GM12878 (cell line): ENCODE measurements at regions of chr2 and their contacts with region 1.

Region 1: GRCh38 chr2:231111987-231112386 is 12.9 kb downstream of the HTR2B start:
- DNase-seq: no peak
- ATAC-seq: no peak
- H3K4me3 ChIP-seq: no peak overlapping the region
- H3K27ac ChIP-seq: no peak overlapping the region
- H3K4me1 ChIP-seq: no peaks in the 10 kb centered on the region
- H3K27me3 ChIP-seq: no peaks in the 10 kb centered on the region
- CTCF ChIP-seq: no peak
- EP300 ChIP-seq: no peak
- POLR2A ChIP-seq: no peak
- RAD21 ChIP-seq: no peak

Region 2: GRCh38 chr2:231124838-231125568 is 13.0 kb after region 1 on chr2 and contains the start of gene HTR2B:
- CTCF ChIA-PET with region 1: interaction called, 6 read pairs
- POLR2A ChIA-PET with region 1: interaction called, 3 read pairs
- RAD21 ChIA-PET with region 1: no interaction called
- SMC1A ChIA-PET with region 1: interaction called, 11 read pairs
- in situ Hi-C with region 1: no loop called
- intact Hi-C with region 1: no loop called
- DNase-seq: no peak
- ATAC-seq: no peak
- H3K4me3 ChIP-seq: no peak within 1 kb of the TSS; the same call in 1 of the 2 replicates
- H3K27ac ChIP-seq: peak within 1 kb of the TSS; percentile 6; the same call in 1 of the 2 replicates
- H3K4me1 ChIP-seq: peaks cover 11% of the 10 kb centered on the region
- H3K27me3 ChIP-seq: no peaks in the 10 kb centered on the region
- CTCF ChIP-seq: no peak
- EP300 ChIP-seq: no peak
- POLR2A ChIP-seq: no peak
- RAD21 ChIP-seq: no peak
- polyA plus RNA-seq, gene HTR2B: 0.20 to 0.35 TPM